ENCODE measurements at regions of chr17 and their contacts with region 1.

Region 1: GRCh38 chr17:50523208-50523607 is 9.3 kb upstream of the EPN3 start:
- DNase-seq: peak; percentile 88 to 94
- H3K4me3 ChIP-seq: no peak overlapping the region
- H3K4me3 Mint-ChIP-seq: no peak overlapping the region
- H3K27ac Mint-ChIP-seq: peak overlapping the region; percentile 17
- H3K4me1 ChIP-seq: peaks cover 23% of the 10 kb centered on the region
- H3K4me1 Mint-ChIP-seq: peaks cover 26% of the 10 kb centered on the region
- H3K27me3 ChIP-seq: no peaks in the 10 kb centered on the region
- H3K27me3 Mint-ChIP-seq: no peaks in the 10 kb centered on the region
- CTCF ChIP-seq: peak in 1 of 2 experiments; percentile 60

Region 2: GRCh38 chr17:50534222-50534978 is 11.2 kb after region 1 on chr17:
- CTCF ChIA-PET with region 1: interaction called, 13 read pairs
- POLR2A ChIA-PET with region 1: no interaction called
- intact Hi-C with region 1: no loop called
- DNase-seq: peak; percentile 68 to 72
- H3K4me3 ChIP-seq: no peak overlapping the region
- H3K4me3 Mint-ChIP-seq: peak overlapping the region; percentile 87
- H3K27ac Mint-ChIP-seq: peak overlapping the region; percentile 16
- H3K4me1 ChIP-seq: peaks cover 47% of the 10 kb centered on the region
- H3K4me1 Mint-ChIP-seq: peaks cover 46% of the 10 kb centered on the region
- H3K27me3 ChIP-seq: no peaks in the 10 kb centered on the region
- H3K27me3 Mint-ChIP-seq: no peaks in the 10 kb centered on the region
- CTCF ChIP-seq: peak; percentile 37 to 72